Sciatic nerve (tissue), 2 donors: ENCODE measurements at regions of chr17 and their contacts with region 1.

Region 1: DNA sequence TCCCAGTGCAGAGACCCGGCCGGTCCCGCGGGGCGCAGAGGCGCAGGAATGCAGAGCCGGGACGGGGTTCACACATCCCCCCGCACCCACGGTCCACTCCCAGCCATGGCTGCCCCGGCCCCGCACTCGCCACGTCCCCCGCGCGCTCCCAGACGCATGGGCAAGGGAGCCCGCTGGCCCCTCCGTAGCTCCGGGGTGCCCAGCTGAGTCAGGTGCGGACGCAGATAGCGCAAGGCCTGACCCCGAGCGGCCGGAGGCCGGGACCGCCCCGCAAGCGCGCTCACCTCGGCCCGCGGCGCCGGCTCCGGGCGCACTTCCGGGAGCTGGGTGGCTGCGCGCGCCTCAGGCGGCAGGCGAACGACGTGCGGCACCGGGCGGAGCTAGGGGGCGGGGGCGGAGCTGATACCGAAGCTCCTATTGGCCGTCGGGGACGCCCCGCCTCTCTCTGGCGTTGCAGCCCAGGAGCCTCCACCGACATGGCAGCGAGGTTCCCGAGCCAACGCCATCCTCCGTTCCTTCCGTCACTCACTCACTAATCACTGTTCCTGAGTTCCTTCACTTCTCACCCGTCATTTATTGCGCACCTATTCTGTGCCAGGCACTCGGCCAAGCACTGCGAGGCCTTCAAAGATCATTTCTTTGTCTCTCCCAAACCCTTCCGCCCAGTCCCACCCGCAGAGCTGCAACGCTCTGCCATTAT is at the start of gene ZNF18:
- DNase-seq: peak; percentile 98
- ATAC-seq: peak; percentile 100
- total RNA-seq, gene ZNF18: 8.2 TPM

Region 2: DNA sequence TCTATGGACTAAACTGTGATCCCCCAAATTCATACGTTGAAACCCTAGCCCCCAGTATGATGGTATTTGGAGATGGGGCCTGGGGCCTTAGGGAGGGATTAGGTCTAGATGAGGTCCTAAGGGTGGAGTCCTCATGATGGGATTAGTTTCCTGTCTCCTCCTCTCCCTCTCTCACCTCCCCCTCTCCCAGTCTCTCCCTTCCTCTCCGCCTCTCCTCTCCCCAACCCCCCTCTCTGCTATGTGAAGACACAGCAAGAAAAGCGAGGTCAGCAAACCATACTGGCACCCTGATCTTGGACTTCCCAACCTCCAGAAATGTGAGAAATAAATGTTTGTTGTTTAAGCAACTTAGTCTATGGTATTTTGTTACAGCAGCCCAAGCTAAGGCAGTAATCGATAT is 15.4 kb before region 1 on chr17:
- intact Hi-C with region 1: loop called (anchors 1 kb)
- DNase-seq: no peak
- ATAC-seq: no peak